Activated naive CD4-positive, alpha-beta T cell treated with anti-CD3 and anti-CD28 coated beads for 36 hours (primary cell): ENCODE measurements at regions of chr1 and their contacts with region 1.

Region 1: DNA sequence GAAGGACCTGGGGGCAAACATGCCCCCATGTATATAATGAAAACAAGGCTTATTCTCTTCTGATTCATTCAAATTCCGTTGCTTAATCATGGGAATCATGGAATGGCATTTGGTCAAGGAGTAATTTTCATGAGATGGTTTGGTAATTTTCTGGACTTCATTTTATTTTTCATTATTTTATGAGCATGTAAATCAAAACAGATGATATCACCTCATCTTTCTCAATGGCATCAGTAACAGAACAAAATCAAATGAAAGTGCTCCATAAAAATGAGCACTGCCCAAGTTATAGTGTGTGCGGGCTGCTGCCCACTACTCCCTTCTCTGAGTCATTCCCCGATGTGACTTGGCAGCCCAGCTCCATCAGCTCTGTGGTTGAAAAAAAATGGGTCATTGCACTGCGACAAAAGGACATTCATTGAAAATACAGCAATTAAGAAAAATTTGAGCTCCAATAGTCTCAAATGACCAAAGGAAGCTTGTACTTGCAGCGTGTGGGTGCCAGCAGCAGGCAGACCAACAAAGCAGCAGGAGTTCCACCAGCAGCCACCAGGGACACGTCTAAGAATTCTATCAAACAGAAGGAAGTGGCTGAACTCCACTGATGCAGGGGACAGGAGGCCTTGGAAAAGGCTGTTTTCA is 84.3 kb upstream of the VAV3 start:
- DNase-seq: peak; percentile 51
- H3K4me3 Mint-ChIP-seq: no peak overlapping the region
- H3K27ac Mint-ChIP-seq: no peak overlapping the region
- H3K4me1 Mint-ChIP-seq: peaks cover 35% of the 10 kb centered on the region
- H3K27me3 Mint-ChIP-seq: no peaks in the 10 kb centered on the region

Region 2: DNA sequence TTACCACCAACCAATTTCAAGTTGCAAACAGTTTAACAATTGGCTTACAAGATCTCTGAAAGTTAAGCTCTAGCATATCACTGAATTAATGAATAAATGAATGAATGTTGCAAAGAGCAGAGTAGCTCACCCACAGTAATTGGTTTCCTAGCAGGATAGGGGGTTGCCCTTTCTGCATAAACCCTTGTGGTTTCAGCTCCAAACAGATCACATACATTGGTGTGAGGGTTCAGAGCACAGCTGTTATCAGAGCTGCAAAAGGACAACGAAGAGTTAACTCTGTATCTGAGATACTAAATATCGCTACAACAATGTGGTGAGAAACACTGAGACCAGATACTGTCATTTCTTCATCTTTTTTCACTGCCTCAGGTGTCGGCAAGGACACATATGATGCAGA is 861.9 kb before region 1 on chr1:
- CTCF ChIA-PET with region 1: no interaction called
- intact Hi-C with region 1: no loop called
- DNase-seq: no peak
- H3K4me3 Mint-ChIP-seq: no peak overlapping the region
- H3K27ac Mint-ChIP-seq: no peak overlapping the region
- H3K4me1 Mint-ChIP-seq: no peaks in the 10 kb centered on the region
- H3K27me3 Mint-ChIP-seq: peaks cover 2% of the 10 kb centered on the region

Region 3: GRCh38 chr1:107897438-107898345 is 151.6 kb before region 1 on chr1:
- CTCF ChIA-PET with region 1: interaction called, 5 read pairs
- intact Hi-C with region 1: loop called (anchors 5 kb)
- DNase-seq: no peak
- H3K4me3 Mint-ChIP-seq: peak overlapping the region; percentile 25
- H3K27ac Mint-ChIP-seq: peak overlapping the region; percentile 78
- H3K4me1 Mint-ChIP-seq: peaks cover 40% of the 10 kb centered on the region
- H3K27me3 Mint-ChIP-seq: no peaks in the 10 kb centered on the region

Region 4: DNA sequence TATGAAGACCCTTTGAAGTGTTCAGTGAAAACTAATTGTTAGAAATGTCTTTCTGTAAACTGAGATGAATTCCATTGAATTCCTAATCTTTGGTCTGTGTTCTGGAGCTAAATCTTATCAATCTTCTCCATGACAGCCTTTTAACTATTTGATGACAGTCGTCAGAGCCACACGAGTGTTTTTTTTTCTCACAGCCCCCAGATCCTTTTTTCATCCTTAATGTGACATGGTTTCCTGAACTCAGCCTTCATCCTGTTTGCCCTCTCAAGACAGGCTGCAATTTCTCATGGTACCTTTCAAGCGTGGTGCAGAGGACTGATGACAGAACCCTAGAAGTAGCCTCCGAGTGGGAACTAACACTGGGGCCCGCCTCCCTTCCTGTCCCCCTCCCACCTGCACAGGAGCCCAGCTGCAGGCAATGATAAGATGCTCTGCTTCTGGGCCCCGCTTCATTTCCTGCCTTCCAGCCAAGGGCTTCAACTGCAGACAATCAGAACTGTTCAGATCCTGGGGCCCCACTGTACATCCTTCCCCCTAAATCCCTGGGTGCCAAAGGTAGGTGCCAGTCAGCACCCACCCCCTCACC is 30.2 kb after region 1 on chr1:
- CTCF ChIA-PET with region 1: interaction called, 5 read pairs
- intact Hi-C with region 1: loop called (anchors 1 kb)
- DNase-seq: peak; percentile 82
- H3K4me3 Mint-ChIP-seq: no peak overlapping the region
- H3K27ac Mint-ChIP-seq: peak overlapping the region; percentile 84
- H3K4me1 Mint-ChIP-seq: peaks cover 66% of the 10 kb centered on the region
- H3K27me3 Mint-ChIP-seq: no peaks in the 10 kb centered on the region

Region 5: DNA sequence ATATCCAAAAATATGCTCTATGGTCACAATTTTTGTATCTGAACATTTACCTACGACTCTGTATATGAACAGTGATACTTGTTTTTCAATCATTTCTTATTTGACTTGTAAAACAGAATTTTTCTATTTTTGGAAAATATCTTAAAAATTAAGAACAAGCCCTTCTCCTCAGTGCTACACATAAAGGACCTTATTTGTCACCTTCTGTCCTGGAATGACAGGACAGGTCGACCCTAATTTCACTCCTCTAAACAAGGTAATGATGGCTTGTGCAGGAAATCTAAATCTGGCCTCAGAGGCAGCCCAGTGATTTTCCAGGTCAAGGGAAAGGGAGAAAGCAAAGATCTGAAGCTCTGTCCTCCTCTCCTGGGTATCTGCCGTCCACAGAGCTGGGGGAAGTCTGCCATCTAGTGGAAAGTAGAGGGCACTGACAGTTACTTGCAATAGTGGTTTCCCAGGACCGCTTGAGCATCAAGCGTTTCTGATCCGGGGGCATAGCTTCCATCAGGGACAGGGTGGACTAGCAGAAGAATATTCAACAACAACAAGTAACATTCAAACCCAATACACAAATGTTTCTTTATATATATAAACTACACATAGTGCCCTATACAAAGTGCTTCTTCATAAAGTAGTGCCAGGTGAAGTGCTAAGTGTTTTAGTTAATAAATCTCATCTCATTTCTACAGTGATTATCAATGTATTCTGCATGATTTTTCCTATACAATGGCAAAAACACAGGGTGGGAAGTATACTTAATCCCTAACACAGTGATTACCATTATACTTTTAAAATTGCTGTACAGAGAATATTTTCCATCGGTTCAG is 76.2 kb after region 1 on chr1:
- CTCF ChIA-PET with region 1: interaction called, 4 read pairs
- intact Hi-C with region 1: loop called (anchors 2 kb)
- DNase-seq: peak; percentile 80
- H3K4me3 Mint-ChIP-seq: no peak overlapping the region
- H3K27ac Mint-ChIP-seq: no peak overlapping the region
- H3K4me1 Mint-ChIP-seq: peaks cover 3% of the 10 kb centered on the region
- H3K27me3 Mint-ChIP-seq: no peaks in the 10 kb centered on the region